Heart right ventricle (tissue), 16 donors: ENCODE measurements at regions of chr19 and their contacts with region 1.

Region 1: GRCh38 chr19:40662921-40663694 is 27.3 kb downstream of the NUMBL start:
- DNase-seq: peak; percentile 94 to 95
- ATAC-seq: peak; percentile 83 to 93 (median 90)
- H3K4me3 ChIP-seq: peak overlapping the region; percentile 36 to 83 (median 65)
- H3K27ac ChIP-seq: peak overlapping the region; percentile 70 to 94 (median 90)
- H3K4me1 ChIP-seq: peaks cover 0 to 23% (median 12%) of the 10 kb centered on the region in 9 donors
- H3K27me3 ChIP-seq: no peaks in the 10 kb centered on the region
- CTCF ChIP-seq: peak; percentile 96 to 100 (median 99)

Region 2: DNA sequence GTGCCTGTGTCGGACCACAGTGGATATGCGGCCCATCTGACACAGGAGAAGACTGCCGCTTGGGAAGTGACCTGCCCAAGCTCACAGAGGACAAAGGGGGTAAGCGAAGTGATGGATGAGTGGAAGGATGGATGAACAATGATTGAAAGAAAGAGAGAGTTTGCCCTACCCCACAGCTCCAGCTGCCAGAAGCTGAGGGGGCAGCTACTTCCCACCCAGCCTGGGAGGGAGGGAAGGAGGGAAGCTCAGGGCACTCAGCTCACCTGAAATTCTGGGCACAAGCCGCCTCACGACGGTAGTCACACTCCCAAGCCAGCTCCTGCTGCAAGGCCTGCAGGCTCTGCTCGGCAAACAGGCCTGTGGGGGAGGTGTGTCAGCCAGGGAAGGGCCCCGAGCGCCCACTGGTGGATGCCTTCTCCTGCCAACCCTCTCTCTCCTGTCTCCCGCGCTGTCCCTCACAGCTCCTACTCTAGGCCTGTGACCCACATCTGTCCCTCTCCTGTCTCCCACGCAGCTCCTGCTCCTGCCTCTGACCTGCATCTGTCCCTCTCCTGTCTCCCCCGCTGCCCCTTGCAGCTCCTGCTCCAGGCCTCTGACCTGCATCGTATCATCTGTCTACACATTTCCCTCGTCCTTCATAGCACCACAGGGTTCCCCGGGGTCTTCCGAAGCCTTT is 39.4 kb after region 1 on chr19:
- intact Hi-C with region 1: no loop called
- DNase-seq: peak; percentile 39 to 59
- ATAC-seq: peak; percentile 40 to 76 (median 69)
- H3K4me3 ChIP-seq: no peak overlapping the region
- H3K27ac ChIP-seq: peak overlapping the region in 4 of 10 donors; percentile 28 to 61 (median 45)
- H3K4me1 ChIP-seq: peaks cover 0 to 41% (median 22%) of the 10 kb centered on the region in 9 donors
- H3K27me3 ChIP-seq: no peaks in the 10 kb centered on the region
- CTCF ChIP-seq: peak in 8 of 9 donors; percentile 4 to 57 (median 45)

Region 3: GRCh38 chr19:40716655-40717324 is 53.7 kb after region 1 on chr19 and contains the starts of genes COQ8B and ITPKC:
- intact Hi-C with region 1: loop called in 3 of 10 experiments (anchors 2 to 5 kb)
- DNase-seq: peak; percentile 100
- ATAC-seq: peak; percentile 77 to 87 (median 84)
- H3K4me3 ChIP-seq: peak within 1 kb of the TSS; percentile 64 to 89 (median 78)
- H3K27ac ChIP-seq: peak within 1 kb of the TSS; percentile 87 to 98 (median 97)
- H3K4me1 ChIP-seq: peaks cover 16 to 83% (median 64%) of the 10 kb centered on the region in 9 donors
- H3K27me3 ChIP-seq: no peaks in the 10 kb centered on the region
- CTCF ChIP-seq: peak in 5 of 9 donors; percentile 16 to 44 (median 26)
- total RNA-seq, gene COQ8B: 17.9 to 34.3 (median 27.3) TPM
- total RNA-seq, gene ITPKC: 6.2 to 15.3 (median 9.1) TPM

Region 4: DNA sequence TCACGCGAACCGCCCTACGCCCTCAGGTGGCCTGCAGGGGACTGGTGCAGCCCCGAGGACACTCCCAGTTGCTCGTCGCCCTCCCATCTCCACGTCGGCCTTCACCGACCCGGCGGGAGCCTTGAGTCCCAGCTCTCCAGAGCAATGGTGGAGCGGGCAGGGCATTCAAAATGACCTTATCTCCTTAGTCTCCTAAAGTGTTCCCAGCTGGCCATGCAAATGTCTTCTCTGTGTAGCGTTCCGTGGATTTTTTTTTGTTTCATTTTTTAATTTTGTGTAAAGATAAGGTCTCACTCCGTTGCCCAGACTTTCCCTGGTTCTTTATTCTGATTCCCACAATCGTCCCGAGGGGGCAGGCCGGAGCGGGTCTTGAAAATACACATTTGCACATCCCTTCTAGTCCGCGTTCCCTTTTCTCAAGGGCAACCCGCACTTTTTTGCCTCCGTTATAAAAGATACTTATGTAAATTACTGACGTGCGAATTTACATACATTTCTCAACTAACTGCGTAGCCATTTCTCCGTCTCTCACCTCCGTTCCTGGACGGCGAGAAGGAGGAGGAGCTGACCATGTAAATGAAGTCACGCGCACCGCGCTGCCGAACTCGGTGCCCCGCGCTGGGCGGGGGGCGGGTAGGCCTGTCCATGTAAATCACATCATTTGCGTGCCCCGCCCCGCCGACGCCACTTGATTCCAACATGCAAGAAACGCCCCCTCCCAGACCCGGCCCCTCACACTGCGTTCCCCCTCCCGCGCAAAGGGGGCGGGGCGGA is 135.3 kb after region 1 on chr19:
- intact Hi-C with region 1: loop called in 1 of 10 experiments (anchors 5 kb)
- DNase-seq: peak; percentile 100
- ATAC-seq: peak; percentile 5 to 92 (median 89)
- H3K4me3 ChIP-seq: peak overlapping the region; percentile 11 to 97 (median 83)
- H3K27ac ChIP-seq: peak overlapping the region; percentile 42 to 99 (median 96)
- H3K4me1 ChIP-seq: peaks cover 22 to 47% (median 42%) of the 10 kb centered on the region in 9 donors
- H3K27me3 ChIP-seq: no peaks in the 10 kb centered on the region
- CTCF ChIP-seq: peak in 8 of 9 donors; percentile 8 to 64 (median 42)

Region 5: GRCh38 chr19:40813182-40813958 is 150.3 kb after region 1 on chr19:
- intact Hi-C with region 1: loop called in 6 of 10 experiments (anchors 2 to 5 kb)
- DNase-seq: no peak
- ATAC-seq: no peak
- H3K4me3 ChIP-seq: no peak overlapping the region
- H3K27ac ChIP-seq: no peak overlapping the region
- H3K4me1 ChIP-seq: peaks cover 3 to 47% (median 34%) of the 10 kb centered on the region in 9 donors
- H3K27me3 ChIP-seq: no peaks in the 10 kb centered on the region
- CTCF ChIP-seq: no peak

Region 6: GRCh38 chr19:40908976-40909375 is 245.9 kb after region 1 on chr19:
- intact Hi-C with region 1: loop called in 1 of 10 experiments (anchors 5 kb)
- DNase-seq: peak in 1 of 2 donors; percentile 37
- ATAC-seq: peak in 1 of 8 donors; percentile 85
- H3K4me3 ChIP-seq: peak overlapping the region in 3 of 10 donors; percentile 24 to 40 (median 38)
- H3K27ac ChIP-seq: no peak overlapping the region
- H3K4me1 ChIP-seq: peaks cover 0 to 7% (median 0%) of the 10 kb centered on the region in 9 donors
- H3K27me3 ChIP-seq: peaks cover 0 to 40% (median 17%) of the 10 kb centered on the region in 7 donors
- CTCF ChIP-seq: peak in 3 of 9 donors; percentile 36 to 64 (median 54)

Region 7: DNA sequence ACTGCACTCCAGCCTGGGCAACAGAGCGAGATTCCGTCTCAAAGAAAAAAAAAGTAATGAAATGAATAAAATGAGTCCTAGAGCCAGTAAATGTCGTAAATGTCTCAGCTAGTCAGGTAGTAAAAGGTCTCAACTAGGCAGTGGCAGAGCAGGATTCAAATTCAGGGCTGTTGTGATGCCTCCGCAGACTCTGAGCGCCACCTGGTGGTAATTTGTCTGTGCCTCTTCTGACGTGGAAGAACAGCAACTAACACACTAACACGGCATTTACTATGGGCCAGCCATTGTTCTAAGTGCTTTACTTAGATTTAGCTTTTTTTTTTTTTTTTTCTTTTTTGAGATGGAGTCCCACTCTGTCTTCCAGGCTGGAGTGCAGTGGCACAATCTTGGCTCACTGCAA is 481.3 kb after region 1 on chr19:
- intact Hi-C with region 1: loop called in 7 of 10 experiments (anchors 2 to 10 kb)
- DNase-seq: peak; percentile 69 to 73
- ATAC-seq: peak in 6 of 8 donors; percentile 65 to 82 (median 68)
- H3K4me3 ChIP-seq: no peak overlapping the region
- H3K27ac ChIP-seq: no peak overlapping the region
- H3K4me1 ChIP-seq: no peaks in the 10 kb centered on the region
- H3K27me3 ChIP-seq: peaks cover 0 to 31% (median 17%) of the 10 kb centered on the region in 7 donors
- CTCF ChIP-seq: peak; percentile 65 to 87 (median 77)

Region 8: DNA sequence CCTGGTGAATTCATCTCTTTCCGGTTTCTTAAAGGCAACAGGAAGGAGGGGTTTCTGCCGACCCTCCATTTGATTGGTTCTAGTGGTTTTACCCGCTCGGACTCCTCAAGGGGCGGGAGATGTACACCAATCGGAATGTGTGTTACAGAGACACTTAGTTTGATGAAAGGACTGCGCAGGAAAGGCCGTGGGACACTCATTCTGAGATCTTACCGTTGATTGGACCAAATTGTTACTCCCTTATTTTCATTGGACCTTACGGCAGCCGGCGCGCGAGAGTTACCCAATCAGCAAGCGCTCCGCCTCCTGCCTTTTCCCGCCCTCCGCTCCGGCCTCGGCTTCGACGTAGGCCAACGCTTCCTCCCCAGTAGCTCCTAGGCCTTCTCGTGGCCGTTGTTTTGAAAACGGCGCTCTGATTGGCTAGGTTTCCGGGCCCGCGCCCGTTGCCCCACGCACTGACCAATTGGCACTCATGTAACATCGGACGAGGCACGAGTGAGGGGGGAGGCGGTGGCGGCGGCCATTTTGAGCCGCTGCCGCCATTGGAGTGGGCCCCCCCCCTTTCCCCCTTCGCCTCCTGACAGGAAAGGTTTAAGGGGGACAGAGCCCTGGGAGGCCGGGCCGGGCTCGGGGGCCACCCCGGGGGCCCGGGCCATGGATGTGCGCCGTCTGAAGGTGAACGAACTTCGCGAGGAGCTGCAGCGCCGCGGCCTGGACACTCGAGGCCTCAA is 600.9 kb after region 1 on chr19 and contains the start of gene HNRNPUL1:
- intact Hi-C with region 1: loop called in 1 of 10 experiments (anchors 10 kb)
- DNase-seq: peak; percentile 97 to 100
- ATAC-seq: peak; percentile 81 to 92 (median 89)
- H3K4me3 ChIP-seq: peak within 1 kb of the TSS; percentile 45 to 99 (median 91)
- H3K27ac ChIP-seq: peak within 1 kb of the TSS; percentile 92 to 100 (median 99)
- H3K4me1 ChIP-seq: peaks cover 15 to 38% (median 25%) of the 10 kb centered on the region in 9 donors
- H3K27me3 ChIP-seq: no peaks in the 10 kb centered on the region
- CTCF ChIP-seq: peak in 6 of 9 donors; percentile 12 to 58 (median 38)
- total RNA-seq, gene HNRNPUL1: 101 to 151 (median 108) TPM